Right cardiac atrium (tissue), 5 donors: ENCODE measurements at regions of chr5 and their contacts with region 1.

Region 1: GRCh38 chr5:111278845-111279504 is 54.8 kb downstream of the CAMK4 start:
- DNase-seq: peak; percentile 34 to 77 (median 72)
- ATAC-seq: peak in 1 of 2 donors; percentile 68
- H3K4me3 ChIP-seq: no peak overlapping the region
- H3K27ac ChIP-seq: no peak overlapping the region
- H3K4me1 ChIP-seq: no peaks in the 10 kb centered on the region
- H3K27me3 ChIP-seq: no peaks in the 10 kb centered on the region

Region 2: DNA sequence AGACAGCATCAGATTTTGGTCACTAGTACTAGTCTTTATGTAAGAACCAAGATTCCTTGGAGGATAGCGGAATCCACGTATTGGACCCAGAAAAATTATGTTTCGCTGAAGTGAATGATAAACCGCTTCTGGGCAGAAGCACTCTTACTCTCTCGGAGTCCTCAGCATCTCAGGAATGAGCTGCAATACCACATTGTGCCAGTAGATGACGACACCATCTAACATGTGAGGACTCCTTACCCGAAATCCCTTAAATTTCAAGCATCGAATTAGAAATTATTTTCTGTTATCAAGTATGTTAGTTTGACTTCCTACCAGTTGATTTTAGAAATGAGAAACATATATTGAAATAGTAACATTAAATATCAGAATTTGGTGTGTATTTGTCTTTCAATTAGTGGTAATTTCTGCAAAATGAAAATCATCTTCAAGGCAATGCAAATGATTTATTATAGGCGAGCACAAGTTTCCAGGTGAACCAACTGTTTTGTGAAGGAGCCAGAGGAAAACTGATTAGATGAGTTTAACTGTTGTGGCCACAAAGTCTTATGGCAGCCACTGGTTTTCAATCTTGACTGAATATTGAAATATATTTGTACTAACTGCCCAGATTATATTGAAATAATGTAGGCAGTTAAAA is 120.8 kb before region 1 on chr5:
- intact Hi-C with region 1: loop called in 1 of 4 experiments (anchors 2 kb)
- DNase-seq: peak in 2 of 3 donors; percentile 46 to 63
- ATAC-seq: peak; percentile 61 to 75
- H3K4me3 ChIP-seq: no peak overlapping the region
- H3K27ac ChIP-seq: no peak overlapping the region
- H3K4me1 ChIP-seq: no peaks in the 10 kb centered on the region
- H3K27me3 ChIP-seq: no peaks in the 10 kb centered on the region

Region 3: GRCh38 chr5:111394580-111394979 is 115.6 kb after region 1 on chr5:
- intact Hi-C with region 1: no loop called
- DNase-seq: no peak
- ATAC-seq: no peak
- H3K4me3 ChIP-seq: no peak overlapping the region
- H3K27ac ChIP-seq: no peak overlapping the region
- H3K4me1 ChIP-seq: no peaks in the 10 kb centered on the region
- H3K27me3 ChIP-seq: no peaks in the 10 kb centered on the region